Endothelial cell of umbilical vein (primary cell): ENCODE measurements at regions of chr4 and their contacts with region 1.

Region 1: DNA sequence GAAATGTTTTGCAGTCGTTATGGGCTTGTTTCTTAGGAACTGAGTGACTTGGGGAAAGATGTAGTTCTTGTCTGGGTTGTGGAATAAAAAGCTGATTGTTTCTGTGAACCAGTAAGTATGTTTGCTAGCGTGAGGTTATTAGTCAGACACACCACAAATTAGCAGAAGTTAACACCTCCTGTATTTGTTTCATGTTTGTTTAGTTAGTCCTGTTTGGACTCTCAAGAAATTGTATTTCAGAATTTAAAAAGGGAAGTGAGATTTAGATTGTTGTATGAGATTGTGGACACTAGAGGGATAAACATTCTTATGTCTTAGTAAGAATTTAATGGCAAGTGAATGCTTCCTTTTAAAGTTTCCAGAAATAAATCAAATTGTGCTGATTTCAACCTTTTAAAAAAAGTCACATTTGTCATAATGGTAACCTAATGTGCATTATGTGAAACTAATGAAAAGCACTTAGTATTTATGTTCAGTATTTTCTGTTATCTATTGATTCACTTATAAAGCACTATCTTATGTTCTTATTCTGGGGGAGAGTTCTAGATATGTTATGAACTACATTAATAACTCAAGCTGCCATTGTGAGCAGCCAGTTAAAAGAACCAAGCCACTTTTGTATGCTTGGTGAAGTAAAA is 25.6 kb downstream of the ATP10D start:
- DNase-seq: peak; percentile 68
- H3K4me3 ChIP-seq: no peak overlapping the region
- H3K27ac ChIP-seq: peak overlapping the region; percentile 45
- H3K4me1 ChIP-seq: peaks cover 11% of the 10 kb centered on the region
- H3K27me3 ChIP-seq: no peaks in the 10 kb centered on the region
- CTCF ChIP-seq: no peak
- POLR2A ChIP-seq: no peak

Region 2: DNA sequence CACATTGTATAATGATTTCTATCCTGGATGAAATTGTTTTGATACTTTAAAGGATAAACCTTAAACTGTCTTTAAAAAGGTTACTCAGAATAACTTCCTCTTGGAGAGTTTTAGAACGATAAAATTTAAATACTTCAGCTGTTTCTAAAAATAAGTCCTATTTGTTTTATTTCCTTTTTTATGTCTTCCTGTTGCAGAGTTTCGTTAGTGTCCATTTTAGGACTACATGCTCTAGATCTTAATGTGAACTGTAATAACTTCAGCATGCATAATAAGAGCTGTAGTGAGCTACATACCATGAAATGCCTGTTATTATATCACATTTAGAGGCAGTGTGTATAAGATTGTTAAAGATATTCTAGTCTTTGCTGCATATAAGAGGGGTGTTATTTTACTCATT is 10.9 kb before region 1 on chr4:
- CTCF ChIA-PET with region 1: interaction called, 18 read pairs
- POLR2A ChIA-PET with region 1: no interaction called
- dilution Hi-C with region 1: no loop called
- intact Hi-C with region 1: no loop called
- DNase-seq: peak; percentile 26
- H3K4me3 ChIP-seq: no peak overlapping the region
- H3K27ac ChIP-seq: no peak overlapping the region
- H3K4me1 ChIP-seq: peaks cover 2% of the 10 kb centered on the region
- H3K27me3 ChIP-seq: no peaks in the 10 kb centered on the region
- CTCF ChIP-seq: no peak
- POLR2A ChIP-seq: no peak

Region 3: GRCh38 chr4:47567511-47567910 is 56.9 kb after region 1 on chr4:
- CTCF ChIA-PET with region 1: interaction called, 22 read pairs
- POLR2A ChIA-PET with region 1: no interaction called
- dilution Hi-C with region 1: no loop called
- intact Hi-C with region 1: loop called (anchors 1 kb)
- DNase-seq: no peak
- H3K4me3 ChIP-seq: no peak overlapping the region
- H3K27ac ChIP-seq: no peak overlapping the region
- H3K4me1 ChIP-seq: peaks cover 2% of the 10 kb centered on the region
- H3K27me3 ChIP-seq: no peaks in the 10 kb centered on the region
- CTCF ChIP-seq: no peak
- POLR2A ChIP-seq: no peak